Head of caudate nucleus (tissue), 42 donors: ENCODE measurements at regions of chr9 and their contacts with region 1.

Region 1: GRCh38 chr9:133133681-133134418 is 12.8 kb upstream of the RALGDS start:
- DNase-seq: peak in 38 of 42 donors; percentile 58 to 94 (median 82)

Region 2: DNA sequence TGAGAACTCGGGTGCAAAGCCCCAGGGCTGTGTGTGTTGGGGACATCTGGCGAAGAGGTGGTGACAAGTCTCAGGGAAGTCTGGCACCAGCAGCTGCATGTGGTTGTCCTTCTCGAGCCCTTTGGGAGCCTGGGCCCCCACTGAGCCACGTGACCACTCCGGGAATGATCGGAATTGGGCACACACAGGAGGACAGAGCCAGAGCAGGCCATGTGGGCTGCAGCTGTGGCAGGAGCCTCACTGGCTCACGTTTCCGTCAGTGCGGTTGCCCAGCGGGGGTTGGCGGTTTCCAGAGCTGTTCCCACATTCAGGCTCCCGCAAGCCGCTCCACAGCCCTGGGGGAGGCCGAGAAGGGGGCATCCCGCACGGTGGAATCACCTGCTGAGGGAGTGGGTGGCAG is 78.9 kb before region 1 on chr9:
- intact Hi-C with region 1: no loop called
- DNase-seq: peak in 3 of 42 donors; percentile 11 to 29 (median 17)

Region 3: GRCh38 chr9:133119482-133120351 is 14.1 kb before region 1 on chr9:
- intact Hi-C with region 1: loop called (anchors 1 kb)
- DNase-seq: peak in 28 of 42 donors; percentile 45 to 85 (median 62)

Region 4: DNA sequence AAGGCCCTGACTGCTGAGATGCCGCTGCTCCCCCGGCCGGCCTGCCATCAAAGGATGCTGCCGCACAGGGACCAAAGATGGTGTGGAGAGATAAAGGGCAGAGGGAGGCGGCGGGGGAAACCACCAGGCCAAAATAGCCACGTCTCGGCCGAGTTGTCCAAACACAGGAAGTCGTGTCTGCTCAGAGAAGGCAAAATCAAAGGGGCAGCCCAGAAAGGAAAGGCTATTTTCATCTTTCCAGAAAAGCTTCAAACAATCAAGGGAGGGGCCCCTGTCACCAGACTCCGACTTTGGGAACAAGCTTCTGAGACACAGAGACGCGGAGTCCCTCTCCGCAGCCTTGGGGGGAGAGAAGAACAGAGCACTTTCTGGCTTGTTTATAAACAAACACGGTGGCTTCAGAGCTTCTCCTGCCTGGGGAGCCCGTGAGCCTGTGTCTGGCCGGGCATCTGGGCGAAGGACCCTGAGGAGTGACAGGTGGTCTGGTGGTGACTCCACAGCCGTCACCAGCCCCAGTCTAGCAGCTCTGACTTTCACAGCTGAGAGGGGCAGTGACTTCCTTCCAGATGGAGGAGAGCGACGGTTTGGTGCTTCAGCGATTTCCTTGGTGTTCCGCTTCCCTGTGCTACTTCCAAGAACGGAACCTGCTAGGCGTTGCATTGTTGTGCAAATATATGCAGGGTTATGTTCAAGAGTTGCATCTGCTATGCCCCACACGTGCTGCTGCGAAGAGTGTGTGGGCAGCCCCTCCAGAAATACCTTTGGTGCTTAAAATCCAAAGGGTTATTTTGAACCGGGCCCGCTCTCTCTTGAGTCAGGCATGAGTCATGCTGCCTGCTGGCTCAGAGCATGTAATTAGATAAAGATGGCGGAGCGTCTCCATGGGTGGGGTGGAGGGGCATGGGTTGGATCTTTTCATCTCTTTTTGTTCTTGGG is 424.6 kb after region 1 on chr9:
- intact Hi-C with region 1: no loop called
- DNase-seq: peak in 41 of 42 donors; percentile 24 to 92 (median 69)